Activated CD4-positive, alpha-beta T cell treated with anti-CD3 and anti-CD28 coated beads, Interleukin-2, amount 10 ng/mL, durations not matched to agents 24 days and 14 days (primary cell): ENCODE measurements at regions of chr12 and their contacts with region 1.

Region 1: DNA sequence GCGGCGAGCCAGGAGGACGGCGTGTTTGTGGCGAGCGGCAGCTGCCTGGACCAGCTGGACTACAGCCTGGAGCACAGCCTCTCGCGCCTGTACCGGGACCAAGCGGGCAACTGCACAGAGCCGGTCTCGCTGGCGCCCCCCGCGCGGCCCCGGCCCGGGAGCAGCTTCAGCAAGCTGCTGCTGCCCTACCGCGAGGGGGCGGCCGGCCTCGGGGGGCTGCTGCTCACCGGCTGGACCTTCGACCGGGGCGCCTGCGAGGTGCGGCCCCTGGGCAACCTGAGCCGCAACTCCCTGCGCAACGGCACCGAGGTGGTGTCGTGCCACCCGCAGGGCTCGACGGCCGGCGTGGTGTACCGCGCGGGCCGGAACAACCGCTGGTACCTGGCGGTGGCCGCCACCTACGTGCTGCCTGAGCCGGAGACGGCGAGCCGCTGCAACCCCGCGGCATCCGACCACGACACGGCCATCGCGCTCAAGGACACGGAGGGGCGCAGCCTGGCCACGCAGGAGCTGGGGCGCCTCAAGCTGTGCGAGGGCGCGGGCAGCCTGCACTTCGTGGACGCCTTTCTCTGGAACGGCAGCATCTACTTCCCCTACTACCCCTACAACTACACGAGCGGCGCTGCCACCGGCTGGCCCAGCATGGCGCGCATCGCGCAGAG is 873 bp downstream of the PLXNC1 start:
- DNase-seq: peak; percentile 86
- H3K4me3 Mint-ChIP-seq: peak overlapping the region; percentile 97
- H3K27ac Mint-ChIP-seq: peak overlapping the region; percentile 62
- H3K4me1 Mint-ChIP-seq: peaks cover 34% of the 10 kb centered on the region
- H3K27me3 Mint-ChIP-seq: peaks cover 21% of the 10 kb centered on the region

Region 2: DNA sequence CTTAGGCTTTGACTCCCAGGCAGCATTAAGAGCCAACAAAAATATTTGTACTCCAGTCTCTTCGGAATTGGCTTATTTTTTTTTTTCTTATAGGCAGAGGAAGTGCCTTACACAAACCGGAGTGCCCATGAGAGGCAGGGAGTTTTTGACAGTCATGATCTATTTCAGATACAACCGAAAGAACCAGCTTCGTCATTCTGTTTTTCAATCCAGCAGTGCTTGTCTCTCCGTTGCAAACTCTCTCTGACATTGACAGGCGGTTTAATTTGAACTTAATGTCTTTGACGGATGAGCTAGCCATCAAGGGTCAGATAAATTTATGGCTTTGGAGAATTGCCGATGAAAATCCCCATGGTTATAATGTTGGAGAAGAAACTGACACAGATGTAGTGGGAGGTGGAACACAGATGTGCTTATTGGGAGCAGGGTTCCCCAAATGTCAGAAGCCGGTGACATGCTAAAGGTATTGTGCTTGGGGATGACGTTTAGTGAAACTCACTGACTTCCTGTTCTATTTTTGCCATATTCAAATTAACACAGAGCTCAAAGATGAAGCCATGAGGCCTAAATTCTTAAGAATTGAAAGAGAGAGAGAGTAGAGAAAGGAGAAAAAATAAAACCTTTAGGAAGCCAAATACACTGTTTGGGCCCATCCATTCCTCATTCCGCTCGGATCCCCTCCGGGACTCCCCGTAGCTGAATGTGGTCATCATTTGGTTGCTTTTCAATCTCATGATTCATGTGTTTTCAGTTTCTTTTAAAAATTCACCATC is 58.8 kb after region 1 on chr12:
- intact Hi-C with region 1: loop called (anchors 1 kb)
- DNase-seq: peak; percentile 84
- H3K4me3 Mint-ChIP-seq: peak overlapping the region; percentile 84
- H3K27ac Mint-ChIP-seq: peak overlapping the region; percentile 95
- H3K4me1 Mint-ChIP-seq: peaks cover 59% of the 10 kb centered on the region
- H3K27me3 Mint-ChIP-seq: no peaks in the 10 kb centered on the region

Region 3: DNA sequence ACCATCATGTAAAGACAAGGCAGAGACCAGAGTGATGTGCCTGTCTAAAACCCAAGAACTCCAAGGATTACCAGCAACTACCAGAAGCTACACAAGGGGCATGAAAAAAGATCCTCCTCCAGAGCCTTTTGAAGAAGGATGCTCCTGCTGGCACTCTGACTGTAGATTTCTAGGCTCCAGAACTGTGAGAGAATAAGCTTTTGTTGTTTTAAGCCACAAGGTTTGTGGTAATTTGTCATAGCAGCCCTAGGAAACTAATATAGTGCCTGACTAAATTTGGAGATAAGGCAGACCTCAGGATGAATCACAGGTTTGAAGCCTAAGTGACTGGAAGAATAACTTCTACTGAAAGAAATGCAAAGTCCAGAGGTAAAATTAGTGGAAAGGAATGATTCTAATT is 177.5 kb after region 1 on chr12:
- intact Hi-C with region 1: loop called (anchors 2 kb)
- DNase-seq: no peak
- H3K4me3 Mint-ChIP-seq: no peak overlapping the region
- H3K27ac Mint-ChIP-seq: peak overlapping the region; percentile 65
- H3K4me1 Mint-ChIP-seq: peaks cover 24% of the 10 kb centered on the region
- H3K27me3 Mint-ChIP-seq: no peaks in the 10 kb centered on the region

Region 4: GRCh38 chr12:94459728-94460615 is 310.7 kb after region 1 on chr12 and contains the start of gene CEP83:
- intact Hi-C with region 1: loop called (anchors 1 kb)
- DNase-seq: peak; percentile 100
- H3K4me3 Mint-ChIP-seq: peak within 1 kb of the TSS; percentile 98
- H3K27ac Mint-ChIP-seq: peak within 1 kb of the TSS; percentile 98
- H3K4me1 Mint-ChIP-seq: peaks cover 29% of the 10 kb centered on the region
- H3K27me3 Mint-ChIP-seq: peaks cover 4% of the 10 kb centered on the region
- total RNA-seq, gene CEP83: 36.9 and 38.7 TPM in 2 replicates

Region 5: GRCh38 chr12:94649349-94650142 is 500.3 kb after region 1 on chr12:
- intact Hi-C with region 1: loop called (anchors 10 kb)
- DNase-seq: peak; percentile 79
- H3K4me3 Mint-ChIP-seq: peak overlapping the region; percentile 79
- H3K27ac Mint-ChIP-seq: no peak overlapping the region
- H3K4me1 Mint-ChIP-seq: peaks cover 12% of the 10 kb centered on the region
- H3K27me3 Mint-ChIP-seq: peaks cover 75% of the 10 kb centered on the region